Activated CD8-positive, alpha-beta T cell treated with anti-CD3 and anti-CD28 coated beads, Interleukin-2, amount 10 ng/mL, durations not matched to agents 7 days and 5 days (primary cell): ENCODE measurements at regions of chr3 and their contacts with region 1.

Region 1: DNA sequence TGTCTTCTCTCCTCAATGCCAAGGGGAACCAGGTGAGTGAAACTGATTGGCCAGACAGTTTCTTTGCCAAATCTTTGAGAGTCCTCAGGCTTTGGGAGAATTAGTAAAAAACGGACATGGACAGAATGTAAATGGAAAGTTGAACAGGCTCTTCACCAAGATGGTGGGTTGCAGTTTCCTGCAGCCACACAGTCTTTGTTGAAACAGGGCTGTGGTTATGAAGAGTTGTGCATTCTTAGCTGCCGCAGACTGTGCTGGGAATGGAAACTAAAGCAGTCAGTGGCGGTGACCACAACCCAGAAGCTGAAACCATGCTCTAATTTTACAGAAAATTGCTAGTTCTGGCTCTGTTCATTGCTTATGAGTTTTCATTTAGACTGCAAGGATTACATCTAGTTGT is 42.1 kb upstream of the TASOR start:
- DNase-seq: peak; percentile 89
- ATAC-seq: peak; percentile 93
- H3K4me3 Mint-ChIP-seq: peak overlapping the region; percentile 71
- H3K27ac Mint-ChIP-seq: peak overlapping the region; percentile 96
- H3K4me1 Mint-ChIP-seq: peaks cover 69% of the 10 kb centered on the region
- H3K27me3 Mint-ChIP-seq: no peaks in the 10 kb centered on the region

Region 2: DNA sequence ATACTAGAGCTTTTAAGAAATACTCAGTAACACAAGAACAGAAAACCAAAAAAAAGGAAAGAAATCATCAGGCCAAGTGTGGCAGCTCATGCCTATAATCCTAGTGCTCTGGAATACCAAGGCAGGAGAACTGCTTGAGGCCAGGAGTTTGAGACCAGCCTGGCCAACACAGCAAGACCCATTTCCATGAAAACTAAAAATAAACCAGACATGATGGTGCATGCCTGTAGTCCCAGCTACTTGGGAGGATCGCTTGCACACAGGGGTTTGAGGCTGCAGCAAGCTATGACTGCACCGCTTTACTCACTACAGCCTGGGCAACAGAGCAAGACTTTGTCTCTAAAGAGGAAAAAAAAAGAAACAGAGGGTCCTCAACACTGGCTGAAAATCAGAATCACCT is 60.4 kb before region 1 on chr3:
- CTCF ChIA-PET with region 1: no interaction called
- POLR2A ChIA-PET with region 1: no interaction called
- DNase-seq: no peak
- ATAC-seq: no peak
- H3K4me3 Mint-ChIP-seq: no peak overlapping the region
- H3K27ac Mint-ChIP-seq: peak overlapping the region; percentile 61
- H3K4me1 Mint-ChIP-seq: peaks cover 11% of the 10 kb centered on the region
- H3K27me3 Mint-ChIP-seq: no peaks in the 10 kb centered on the region

Region 3: GRCh38 chr3:56702490-56703315 is 22.5 kb before region 1 on chr3:
- CTCF ChIA-PET with region 1: interaction called, 14 read pairs
- POLR2A ChIA-PET with region 1: no interaction called
- DNase-seq: peak; percentile 74
- ATAC-seq: peak; percentile 73
- H3K4me3 Mint-ChIP-seq: no peak overlapping the region
- H3K27ac Mint-ChIP-seq: no peak overlapping the region
- H3K4me1 Mint-ChIP-seq: peaks cover 34% of the 10 kb centered on the region
- H3K27me3 Mint-ChIP-seq: no peaks in the 10 kb centered on the region

Region 4: GRCh38 chr3:56976651-56977560 is 251.7 kb after region 1 on chr3:
- CTCF ChIA-PET with region 1: no interaction called
- POLR2A ChIA-PET with region 1: no interaction called
- DNase-seq: no peak
- ATAC-seq: no peak
- H3K4me3 Mint-ChIP-seq: no peak overlapping the region
- H3K27ac Mint-ChIP-seq: no peak overlapping the region
- H3K4me1 Mint-ChIP-seq: peaks cover 17% of the 10 kb centered on the region
- H3K27me3 Mint-ChIP-seq: no peaks in the 10 kb centered on the region